B cell (primary cell): ENCODE measurements at regions of chr5 and their contacts with region 1.

Region 1: DNA sequence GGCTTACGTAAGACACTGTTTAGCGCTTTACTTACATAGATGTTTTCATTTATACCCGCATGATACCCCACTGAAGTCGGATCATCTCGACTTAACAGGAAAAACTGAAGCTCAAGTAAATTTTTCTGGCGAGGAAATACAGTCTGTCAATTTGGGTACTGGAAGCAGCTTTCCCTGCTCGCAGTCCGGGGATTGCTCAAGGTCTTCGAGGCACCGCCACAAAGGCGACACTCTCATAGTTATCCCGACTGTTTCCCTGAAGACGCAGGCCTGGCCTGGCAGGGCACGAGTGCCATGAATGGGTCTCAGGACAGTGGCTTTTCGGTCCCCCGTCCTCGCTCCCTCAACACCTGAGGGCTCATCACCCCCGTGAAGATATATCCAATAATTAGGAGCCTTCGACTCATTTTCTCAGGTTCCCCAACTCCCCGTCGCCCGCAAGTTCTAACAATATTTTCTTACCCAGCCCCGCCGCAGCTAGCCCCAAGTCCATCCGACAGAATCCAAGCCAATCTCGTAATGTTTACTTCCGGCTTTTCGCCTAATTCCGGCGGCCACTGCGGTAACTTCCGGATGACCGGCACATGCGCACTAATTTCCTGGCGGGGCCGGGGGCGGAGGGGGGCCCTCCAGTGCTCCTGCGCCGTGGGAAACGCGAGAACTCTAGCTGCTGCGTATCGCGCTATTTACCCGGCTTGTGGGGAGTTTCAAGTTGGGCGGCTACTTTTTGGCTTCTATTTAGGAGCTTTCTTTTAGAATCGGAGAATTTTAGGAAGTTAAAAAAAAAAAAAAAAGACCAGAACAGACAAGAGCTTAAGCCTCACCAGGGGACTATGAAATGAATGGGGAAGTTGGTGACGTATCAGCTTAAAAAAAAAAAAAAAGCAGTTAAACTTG is at the start of gene SLU7:
- DNase-seq: peak; percentile 97
- ATAC-seq: peak; percentile 73
- H3K4me3 ChIP-seq: peak within 1 kb of the TSS; percentile 72 to 99 (median 95)
- H3K4me3 Mint-ChIP-seq: peak within 1 kb of the TSS; percentile 92
- H3K27ac ChIP-seq: peak within 1 kb of the TSS; percentile 95
- H3K27ac Mint-ChIP-seq: peak within 1 kb of the TSS; percentile 91
- H3K4me1 ChIP-seq: peaks cover 32 to 41% of the 10 kb centered on the region in 2 donors
- H3K4me1 Mint-ChIP-seq: peaks cover 64% of the 10 kb centered on the region
- H3K27me3 ChIP-seq: no peaks in the 10 kb centered on the region
- H3K27me3 Mint-ChIP-seq: no peaks in the 10 kb centered on the region
- CTCF ChIP-seq: no peak
- total RNA-seq, gene SLU7: 68.3 and 83.2 TPM in 2 replicates

Region 2: GRCh38 chr5:160008877-160009590 is 409.8 kb before region 1 on chr5 and contains the start of gene TTC1:
- CTCF ChIA-PET with region 1: interaction called, 3 read pairs
- POLR2A ChIA-PET with region 1: no interaction called
- intact Hi-C with region 1: loop called (anchors 10 kb)
- DNase-seq: peak; percentile 98
- ATAC-seq: peak; percentile 97
- H3K4me3 ChIP-seq: peak within 1 kb of the TSS; percentile 85 to 100 (median 98)
- H3K4me3 Mint-ChIP-seq: peak within 1 kb of the TSS; percentile 87
- H3K27ac ChIP-seq: peak within 1 kb of the TSS; percentile 77 to 96
- H3K27ac Mint-ChIP-seq: peak within 1 kb of the TSS; percentile 83
- H3K4me1 ChIP-seq: peaks cover 18 to 19% of the 10 kb centered on the region in 2 donors
- H3K4me1 Mint-ChIP-seq: peaks cover 25% of the 10 kb centered on the region
- H3K27me3 ChIP-seq: no peaks in the 10 kb centered on the region
- H3K27me3 Mint-ChIP-seq: no peaks in the 10 kb centered on the region
- CTCF ChIP-seq: no peak
- total RNA-seq, gene TTC1: 37.5 and 40.4 TPM in 2 replicates

Region 3: GRCh38 chr5:160119142-160119904 is 299.5 kb before region 1 on chr5 and contains the start of gene PWWP2A:
- CTCF ChIA-PET with region 1: no interaction called
- POLR2A ChIA-PET with region 1: no interaction called
- intact Hi-C with region 1: loop called (anchors 1 kb)
- DNase-seq: peak; percentile 99
- ATAC-seq: peak; percentile 90
- H3K4me3 ChIP-seq: peak within 1 kb of the TSS; percentile 56 to 96 (median 72)
- H3K4me3 Mint-ChIP-seq: peak within 1 kb of the TSS; percentile 91
- H3K27ac ChIP-seq: peak within 1 kb of the TSS; percentile 51 to 83
- H3K27ac Mint-ChIP-seq: peak within 1 kb of the TSS; percentile 96
- H3K4me1 ChIP-seq: peaks cover 6 to 7% of the 10 kb centered on the region in 2 donors
- H3K4me1 Mint-ChIP-seq: peaks cover 16% of the 10 kb centered on the region
- H3K27me3 ChIP-seq: no peaks in the 10 kb centered on the region
- H3K27me3 Mint-ChIP-seq: peaks cover 4% of the 10 kb centered on the region
- CTCF ChIP-seq: no peak
- total RNA-seq, gene PWWP2A: 48.8 and 50.1 TPM in 2 replicates

Region 4: GRCh38 chr5:160434022-160434531 is 15.3 kb after region 1 on chr5:
- CTCF ChIA-PET with region 1: interaction called, 79 read pairs
- POLR2A ChIA-PET with region 1: interaction called, 7 read pairs
- intact Hi-C with region 1: loop called (anchors 1 kb)
- DNase-seq: peak; percentile 78
- ATAC-seq: peak; percentile 73
- H3K4me3 ChIP-seq: peak overlapping the region in 4 of 5 experiments; percentile 0 to 48 (median 8)
- H3K4me3 Mint-ChIP-seq: peak overlapping the region; percentile 38
- H3K27ac ChIP-seq: no peak overlapping the region
- H3K27ac Mint-ChIP-seq: peak overlapping the region; percentile 62
- H3K4me1 ChIP-seq: peaks cover 38 to 46% of the 10 kb centered on the region in 2 donors
- H3K4me1 Mint-ChIP-seq: peaks cover 54% of the 10 kb centered on the region
- H3K27me3 ChIP-seq: no peaks in the 10 kb centered on the region
- H3K27me3 Mint-ChIP-seq: no peaks in the 10 kb centered on the region
- CTCF ChIP-seq: no peak

Region 5: DNA sequence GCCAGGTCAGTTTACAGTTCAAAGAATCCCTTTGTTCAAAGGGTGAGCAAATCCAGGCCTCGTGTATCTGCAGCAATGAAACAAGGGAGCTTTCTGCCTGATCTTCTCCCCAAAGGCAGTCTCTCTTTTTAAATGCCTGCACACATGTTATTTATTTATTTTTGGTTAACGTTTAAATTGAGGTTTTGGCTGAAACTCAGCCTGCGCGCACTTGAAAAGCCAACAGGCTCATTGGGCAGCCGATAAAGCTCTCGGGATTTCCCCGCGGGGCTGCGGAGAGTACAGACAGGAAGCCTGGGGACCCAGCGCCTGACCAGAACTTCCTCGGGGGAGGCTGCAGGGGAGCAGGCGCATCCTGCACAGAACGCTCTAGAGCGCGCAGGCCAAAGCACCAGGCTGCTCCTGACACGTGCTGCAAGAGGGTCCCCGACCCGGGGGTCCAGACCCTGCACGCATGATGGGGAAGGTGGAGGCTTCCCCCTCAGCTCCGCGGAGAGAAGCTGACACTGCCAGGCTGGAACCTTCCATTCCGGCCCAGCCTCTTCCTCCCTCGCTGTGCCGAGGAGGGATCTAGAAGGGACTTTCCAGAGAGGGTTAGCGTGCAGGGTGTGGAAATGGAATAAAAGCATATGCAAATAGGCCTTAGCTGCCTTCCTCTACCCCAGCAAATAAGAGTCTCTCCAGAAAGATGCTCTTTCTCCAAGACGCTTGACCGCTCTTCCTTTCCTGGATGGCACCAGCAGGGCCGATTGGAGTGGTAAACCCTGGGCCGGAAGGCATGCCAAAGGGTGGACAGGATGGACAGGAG is 49.0 kb after region 1 on chr5:
- CTCF ChIA-PET with region 1: interaction called, 7 read pairs
- POLR2A ChIA-PET with region 1: interaction called, 3 read pairs
- intact Hi-C with region 1: loop called (anchors 1 kb)
- DNase-seq: peak; percentile 87
- ATAC-seq: peak; percentile 85
- H3K4me3 ChIP-seq: peak overlapping the region; percentile 24 to 58 (median 40)
- H3K4me3 Mint-ChIP-seq: peak overlapping the region; percentile 93
- H3K27ac ChIP-seq: peak overlapping the region in 1 of 2 donors; percentile 60
- H3K27ac Mint-ChIP-seq: peak overlapping the region; percentile 93
- H3K4me1 ChIP-seq: peaks cover 48 to 53% of the 10 kb centered on the region in 2 donors
- H3K4me1 Mint-ChIP-seq: peaks cover 60% of the 10 kb centered on the region
- H3K27me3 ChIP-seq: peaks cover 0 to 32% (median 0%) of the 10 kb centered on the region in 4 experiments
- H3K27me3 Mint-ChIP-seq: no peaks in the 10 kb centered on the region
- CTCF ChIP-seq: no peak

Region 6: GRCh38 chr5:160805376-160805775 is 386.6 kb after region 1 on chr5:
- CTCF ChIA-PET with region 1: no interaction called
- POLR2A ChIA-PET with region 1: no interaction called
- intact Hi-C with region 1: no loop called
- DNase-seq: no peak
- ATAC-seq: no peak
- H3K4me3 ChIP-seq: no peak overlapping the region
- H3K4me3 Mint-ChIP-seq: no peak overlapping the region
- H3K27ac ChIP-seq: no peak overlapping the region
- H3K27ac Mint-ChIP-seq: no peak overlapping the region
- H3K4me1 ChIP-seq: no peaks in the 10 kb centered on the region
- H3K4me1 Mint-ChIP-seq: no peaks in the 10 kb centered on the region
- H3K27me3 ChIP-seq: no peaks in the 10 kb centered on the region
- H3K27me3 Mint-ChIP-seq: peaks cover 8% of the 10 kb centered on the region
- CTCF ChIP-seq: no peak